ENCODE measurements at regions of chr4 and their contacts with region 1.

Region 1: GRCh38 chr4:153249199-153250041 is 45.2 kb downstream of the TRIM2 start:
- DNase-seq: peak; percentile 91
- H3K4me3 Mint-ChIP-seq: peak overlapping the region; percentile 83
- H3K27ac Mint-ChIP-seq: peak overlapping the region; percentile 91
- H3K4me1 Mint-ChIP-seq: peaks cover 27% of the 10 kb centered on the region
- H3K27me3 Mint-ChIP-seq: no peaks in the 10 kb centered on the region

Region 2: GRCh38 chr4:151887031-151887815 is 1362.2 kb before region 1 on chr4:
- CTCF ChIA-PET with region 1: no interaction called
- intact Hi-C with region 1: loop called (anchors 10 kb)
- DNase-seq: peak; percentile 14
- H3K4me3 Mint-ChIP-seq: no peak overlapping the region
- H3K27ac Mint-ChIP-seq: peak overlapping the region; percentile 28
- H3K4me1 Mint-ChIP-seq: peaks cover 21% of the 10 kb centered on the region
- H3K27me3 Mint-ChIP-seq: no peaks in the 10 kb centered on the region

Region 3: DNA sequence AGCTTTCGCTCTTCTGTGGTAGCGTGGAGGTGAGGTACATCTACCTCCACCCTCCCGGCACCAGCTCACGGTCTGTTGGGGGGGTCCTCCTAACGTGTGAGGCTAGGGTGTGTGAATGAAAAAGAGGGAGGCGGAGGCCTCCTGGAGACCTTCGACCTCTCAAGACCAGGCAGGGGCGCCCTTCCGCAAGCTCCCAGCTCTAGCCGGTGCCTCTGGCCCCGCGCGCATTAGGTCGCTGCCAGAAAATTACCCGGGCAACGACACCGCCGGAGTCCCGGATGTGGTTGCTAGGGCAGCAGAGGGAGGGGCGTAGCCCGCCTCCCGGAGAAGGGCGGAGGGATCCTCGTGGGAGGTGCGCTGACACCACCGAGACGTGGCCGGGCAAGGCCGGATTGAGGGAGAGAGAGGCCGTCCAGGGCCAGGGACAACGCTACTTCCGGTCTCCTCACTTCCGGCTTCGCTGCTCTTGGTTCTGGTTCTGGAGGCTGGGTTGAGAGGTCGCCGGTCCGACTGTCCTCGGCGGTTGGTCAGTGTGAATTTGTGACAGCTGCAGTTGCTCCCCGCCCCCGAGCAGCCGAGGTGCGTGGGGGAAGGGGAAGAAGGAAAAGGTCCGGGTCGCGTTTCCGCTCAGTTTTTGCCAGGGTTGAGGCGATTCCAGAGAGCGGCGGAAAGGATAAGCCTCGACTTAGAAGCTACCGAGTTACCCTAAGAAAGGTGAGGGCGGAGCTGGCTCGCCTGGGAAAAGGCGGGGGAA is 469.7 kb before region 1 on chr4 and contains the starts of genes ARFIP1 and TIGD4:
- CTCF ChIA-PET with region 1: no interaction called
- intact Hi-C with region 1: loop called (anchors 5 kb)
- DNase-seq: peak; percentile 97
- H3K4me3 Mint-ChIP-seq: peak within 1 kb of the TSS; percentile 91
- H3K27ac Mint-ChIP-seq: peak within 1 kb of the TSS; percentile 75
- H3K4me1 Mint-ChIP-seq: peaks cover 23% of the 10 kb centered on the region
- H3K27me3 Mint-ChIP-seq: peaks cover 4% of the 10 kb centered on the region
- total RNA-seq, gene ARFIP1: 5.0 to 5.1 TPM
- total RNA-seq, gene TIGD4: 0.07 to 0.27 TPM

Region 4: DNA sequence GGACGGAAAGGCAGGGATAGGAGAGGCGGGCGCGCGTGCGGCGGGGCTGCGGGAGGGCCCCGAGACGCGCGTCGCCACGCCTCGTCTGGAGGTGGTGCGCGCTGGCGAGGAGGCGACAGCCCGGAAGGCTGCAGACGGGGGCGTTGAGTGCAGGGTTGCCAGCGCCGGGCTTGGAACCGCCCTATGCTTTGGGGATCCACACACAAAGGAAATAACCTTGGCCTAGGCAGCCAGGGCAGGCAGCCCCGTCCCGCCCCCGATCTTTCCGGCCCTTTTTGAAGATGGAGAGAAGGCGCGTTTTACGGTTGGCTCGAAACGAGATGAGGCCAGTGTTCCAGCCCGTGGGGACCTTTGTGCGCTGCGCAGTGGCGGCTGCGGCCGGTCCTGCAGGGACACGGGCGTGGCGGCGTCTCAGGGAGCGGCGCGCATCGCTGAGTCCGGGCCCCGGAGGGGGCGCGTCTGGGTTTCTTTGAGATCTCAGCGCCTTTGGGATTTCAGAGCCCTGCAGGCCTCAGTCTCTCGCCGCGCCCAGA is 96.0 kb before region 1 on chr4:
- CTCF ChIA-PET with region 1: interaction called, 3 read pairs
- intact Hi-C with region 1: loop called (anchors 1 kb)
- DNase-seq: peak; percentile 91
- H3K4me3 Mint-ChIP-seq: peak overlapping the region; percentile 80
- H3K27ac Mint-ChIP-seq: peak overlapping the region; percentile 86
- H3K4me1 Mint-ChIP-seq: peaks cover 58% of the 10 kb centered on the region
- H3K27me3 Mint-ChIP-seq: no peaks in the 10 kb centered on the region

Region 5: GRCh38 chr4:153159728-153160221 is 89.6 kb before region 1 on chr4:
- CTCF ChIA-PET with region 1: interaction called, 3 read pairs
- intact Hi-C with region 1: loop called (anchors 1 kb)
- DNase-seq: no peak
- H3K4me3 Mint-ChIP-seq: no peak overlapping the region
- H3K27ac Mint-ChIP-seq: peak overlapping the region; percentile 90
- H3K4me1 Mint-ChIP-seq: peaks cover 54% of the 10 kb centered on the region
- H3K27me3 Mint-ChIP-seq: no peaks in the 10 kb centered on the region

Region 6: DNA sequence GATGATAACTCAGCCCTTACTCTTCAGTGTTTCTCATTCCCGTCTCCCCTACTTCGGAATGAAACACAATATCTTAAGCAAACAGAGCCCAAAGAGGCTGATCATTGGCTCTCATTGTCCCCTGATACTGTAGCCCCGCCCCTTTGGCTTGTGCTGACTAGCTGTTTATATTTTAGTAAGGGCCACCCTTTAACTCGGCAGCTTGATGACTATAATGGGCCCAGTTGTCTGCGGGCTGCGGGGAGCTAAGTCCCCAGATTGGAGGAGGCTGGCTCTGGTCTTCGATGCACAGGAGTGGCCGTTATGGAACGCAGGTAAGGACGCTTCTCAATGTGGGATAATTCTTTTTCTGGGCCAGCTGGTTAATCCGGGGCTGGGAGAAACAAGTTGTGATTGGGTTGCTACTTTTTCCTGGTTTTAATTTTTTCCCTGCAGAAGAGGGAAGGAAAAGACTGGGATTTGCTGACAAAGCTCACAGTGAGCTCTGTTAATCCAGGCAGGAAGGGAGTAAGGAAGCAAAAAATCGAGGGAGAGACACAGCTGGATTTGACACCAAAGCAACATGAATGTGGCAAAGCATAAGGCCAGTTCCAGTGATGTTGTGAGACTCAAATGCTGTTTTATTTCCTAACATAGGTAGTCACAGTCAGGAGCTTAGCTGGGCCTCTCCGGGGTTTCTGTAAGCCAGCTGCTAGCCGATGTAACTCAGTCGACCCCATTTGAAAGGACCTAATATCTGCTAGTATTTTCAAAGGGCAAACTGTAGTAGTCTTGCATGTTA is 45.0 kb before region 1 on chr4 and contains the start of gene TRIM2:
- CTCF ChIA-PET with region 1: no interaction called
- intact Hi-C with region 1: loop called (anchors 2 kb)
- DNase-seq: no peak
- H3K4me3 Mint-ChIP-seq: peak within 1 kb of the TSS; percentile 39
- H3K27ac Mint-ChIP-seq: peak within 1 kb of the TSS; percentile 66
- H3K4me1 Mint-ChIP-seq: peaks cover 34% of the 10 kb centered on the region
- H3K27me3 Mint-ChIP-seq: no peaks in the 10 kb centered on the region
- total RNA-seq, gene TRIM2: 3.8 to 4.2 TPM

Region 7: GRCh38 chr4:153649572-153649991 is 400.2 kb after region 1 on chr4:
- CTCF ChIA-PET with region 1: interaction called, 3 read pairs
- intact Hi-C with region 1: loop called (anchors 5 kb)
- DNase-seq: peak; percentile 44
- H3K4me3 Mint-ChIP-seq: no peak overlapping the region
- H3K27ac Mint-ChIP-seq: no peak overlapping the region
- H3K4me1 Mint-ChIP-seq: peaks cover 32% of the 10 kb centered on the region
- H3K27me3 Mint-ChIP-seq: no peaks in the 10 kb centered on the region